SK-N-SH (cell line): ENCODE measurements at regions of chr20 and their contacts with region 1.

Region 1: DNA sequence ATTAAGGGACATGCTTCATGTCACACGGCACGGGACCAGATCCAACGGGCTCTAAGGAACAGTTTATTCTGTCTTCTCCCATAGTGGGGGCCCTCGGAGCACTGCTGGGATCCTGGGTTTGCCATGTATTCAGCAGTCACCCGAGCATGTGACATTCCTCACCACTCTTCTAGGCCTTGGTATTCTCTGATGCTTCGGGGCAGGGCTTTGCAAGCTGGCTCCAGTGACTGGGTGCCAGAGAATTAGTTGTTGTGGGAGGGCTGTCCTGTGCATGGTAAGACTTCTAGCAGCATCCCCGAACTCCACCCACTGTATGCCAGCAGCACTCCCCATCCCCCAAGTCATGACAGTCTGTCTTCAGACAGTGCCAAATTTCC is 5.4 kb downstream of the CCN5 start:
- DNase-seq: peak; percentile 62
- H3K4me3 ChIP-seq: peak overlapping the region in 1 of 2 experiments; percentile 1; a peak in 1 of 4 replicates
- H3K27ac ChIP-seq: peak overlapping the region; percentile 53 to 91; a peak in 3 of 4 replicates
- H3K4me1 ChIP-seq: peaks cover 6 to 19% of the 10 kb centered on the region in 2 experiments; a peak in 3 of 4 replicates
- H3K27me3 ChIP-seq: no peaks in the 10 kb centered on the region
- CTCF ChIP-seq: no peak
- EP300 ChIP-seq: no peak
- RAD21 ChIP-seq: no peak

Region 2: GRCh38 chr20:44709380-44709779 is 11.2 kb before region 1 on chr20:
- CTCF ChIA-PET with region 1: interaction called, 10 read pairs
- POLR2A ChIA-PET with region 1: no interaction called
- DNase-seq: no peak
- H3K4me3 ChIP-seq: no peak overlapping the region
- H3K27ac ChIP-seq: no peak overlapping the region
- H3K4me1 ChIP-seq: peaks cover 0 to 11% of the 10 kb centered on the region in 2 experiments; a peak in 1 of 4 replicates
- H3K27me3 ChIP-seq: no peaks in the 10 kb centered on the region
- CTCF ChIP-seq: no peak
- EP300 ChIP-seq: no peak
- RAD21 ChIP-seq: no peak

Region 3: DNA sequence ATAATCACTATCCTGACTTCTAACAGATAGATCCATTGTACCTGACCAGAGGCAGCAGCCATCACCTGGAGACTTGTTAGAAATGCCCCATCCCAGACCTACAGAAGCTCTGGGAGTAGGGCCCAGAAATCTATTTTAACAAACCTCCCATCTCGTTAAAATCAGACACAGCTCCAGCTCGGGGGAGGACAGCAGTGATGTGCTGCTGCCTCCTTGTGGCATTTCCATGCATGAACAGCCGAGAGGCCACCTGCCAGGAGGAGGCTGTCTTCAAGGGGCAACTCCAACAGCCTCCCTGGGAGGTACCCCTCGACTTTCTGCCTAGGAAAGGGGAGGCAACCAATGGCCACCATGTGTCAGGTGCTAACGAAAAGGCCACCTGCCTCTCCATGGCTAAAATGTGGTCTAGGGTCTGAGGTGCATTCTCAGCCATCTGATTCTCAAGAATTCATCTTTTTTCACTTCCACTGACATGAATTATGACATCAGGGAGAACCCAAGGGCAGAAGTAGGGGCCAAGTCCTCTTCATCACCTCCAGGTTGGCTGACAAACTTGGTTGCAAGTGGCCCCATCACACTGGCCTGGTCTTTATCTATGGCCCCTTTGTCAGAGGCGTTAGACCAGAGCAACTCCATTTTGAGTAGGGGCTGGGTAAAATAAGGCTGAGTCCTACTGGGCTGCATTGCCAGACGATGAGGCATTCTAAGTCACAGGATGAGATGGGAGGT is 12.9 kb after region 1 on chr20:
- CTCF ChIA-PET with region 1: interaction called, 15 read pairs
- POLR2A ChIA-PET with region 1: no interaction called
- DNase-seq: peak; percentile 71
- H3K4me3 ChIP-seq: no peak overlapping the region; a peak in 1 of 4 replicates
- H3K27ac ChIP-seq: no peak overlapping the region
- H3K4me1 ChIP-seq: peaks cover 17 to 28% of the 10 kb centered on the region in 2 experiments
- H3K27me3 ChIP-seq: no peaks in the 10 kb centered on the region
- CTCF ChIP-seq: peak; percentile 95
- EP300 ChIP-seq: no peak
- RAD21 ChIP-seq: peak; percentile 97